Kidney (tissue), 22 donors: ENCODE measurements at regions of chr2 and their contacts with region 1.

Region 1: GRCh38 chr2:151241224-151241623 is 20.4 kb downstream of the RBM43 start:
- DNase-seq: no peak
- H3K4me3 ChIP-seq: no peak overlapping the region
- H3K27ac ChIP-seq: no peak overlapping the region
- H3K4me1 ChIP-seq: no peaks in the 10 kb centered on the region
- H3K27me3 ChIP-seq: no peaks in the 10 kb centered on the region
- CTCF ChIP-seq: no peak

Region 2: DNA sequence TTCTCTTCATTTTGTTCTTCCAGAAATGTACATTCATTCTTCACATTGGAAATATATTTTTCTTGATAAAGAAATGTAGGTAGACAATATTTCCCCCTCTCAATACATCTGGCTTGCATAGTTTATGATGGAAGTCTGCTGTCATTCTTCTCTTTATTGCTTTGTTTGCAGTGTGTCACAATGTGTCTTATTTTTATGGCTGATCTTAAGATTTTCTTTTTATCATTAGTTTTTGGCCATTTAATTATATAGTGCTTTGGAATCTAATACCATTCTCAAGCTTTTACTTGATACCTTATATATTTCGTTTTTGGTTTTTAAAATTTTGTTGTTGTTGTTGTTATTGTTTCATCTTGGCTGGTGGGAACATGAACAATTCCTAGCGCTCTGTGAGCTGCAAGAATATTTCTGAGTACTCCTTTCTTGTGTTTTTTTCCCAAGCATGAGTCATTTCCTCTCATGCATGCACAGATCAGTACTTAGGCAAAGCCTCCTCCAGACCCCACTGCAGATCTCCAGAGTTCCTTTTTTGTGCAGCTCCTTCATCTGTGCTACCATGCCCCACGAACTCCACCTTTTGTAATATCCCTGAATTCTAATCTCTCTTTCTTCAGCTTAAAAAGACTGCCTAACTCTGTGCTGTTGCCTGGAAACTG is 1640.0 kb before region 1 on chr2:
- intact Hi-C with region 1: loop called (anchors 10 kb)
- DNase-seq: no peak
- H3K4me3 ChIP-seq: no peak overlapping the region
- H3K27ac ChIP-seq: no peak overlapping the region
- H3K4me1 ChIP-seq: peaks cover 0 to 4% (median 0%) of the 10 kb centered on the region in 3 donors
- H3K27me3 ChIP-seq: no peaks in the 10 kb centered on the region
- CTCF ChIP-seq: no peak

Region 3: GRCh38 chr2:150698016-150698661 is 543.1 kb before region 1 on chr2:
- intact Hi-C with region 1: no loop called
- DNase-seq: no peak
- H3K4me3 ChIP-seq: no peak overlapping the region
- H3K27ac ChIP-seq: no peak overlapping the region
- H3K4me1 ChIP-seq: no peaks in the 10 kb centered on the region
- H3K27me3 ChIP-seq: no peaks in the 10 kb centered on the region
- CTCF ChIP-seq: no peak